HAP-1 (cell line): ENCODE measurements at regions of chr9 and their contacts with region 1.

Region 1: DNA sequence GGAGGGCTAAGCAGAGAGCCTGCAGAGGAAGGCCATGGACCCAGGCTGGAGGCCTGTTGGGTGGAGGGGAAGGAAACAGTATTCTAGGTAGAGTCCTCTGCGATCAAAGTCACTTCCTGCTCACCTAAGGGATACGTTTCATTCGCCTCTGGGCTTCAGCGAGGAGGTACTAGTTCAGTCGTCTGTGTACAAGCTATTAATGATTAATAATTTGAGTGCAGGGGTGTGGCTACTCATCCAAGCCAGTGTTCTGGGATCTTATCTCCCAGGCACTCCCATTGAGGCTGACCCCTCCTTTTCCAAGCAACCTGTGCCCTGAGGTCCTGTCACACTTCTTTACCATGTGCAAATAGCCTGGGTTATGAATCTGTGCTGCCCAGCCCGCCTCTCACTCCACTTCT is 25.2 kb downstream of the RALGPS1 start:
- DNase-seq: no peak
- H3K4me3 ChIP-seq: no peak overlapping the region
- H3K4me1 ChIP-seq: no peaks in the 10 kb centered on the region
- H3K27me3 ChIP-seq: peaks cover 5% of the 10 kb centered on the region; the same call in 1 of the 2 replicates

Region 2: DNA sequence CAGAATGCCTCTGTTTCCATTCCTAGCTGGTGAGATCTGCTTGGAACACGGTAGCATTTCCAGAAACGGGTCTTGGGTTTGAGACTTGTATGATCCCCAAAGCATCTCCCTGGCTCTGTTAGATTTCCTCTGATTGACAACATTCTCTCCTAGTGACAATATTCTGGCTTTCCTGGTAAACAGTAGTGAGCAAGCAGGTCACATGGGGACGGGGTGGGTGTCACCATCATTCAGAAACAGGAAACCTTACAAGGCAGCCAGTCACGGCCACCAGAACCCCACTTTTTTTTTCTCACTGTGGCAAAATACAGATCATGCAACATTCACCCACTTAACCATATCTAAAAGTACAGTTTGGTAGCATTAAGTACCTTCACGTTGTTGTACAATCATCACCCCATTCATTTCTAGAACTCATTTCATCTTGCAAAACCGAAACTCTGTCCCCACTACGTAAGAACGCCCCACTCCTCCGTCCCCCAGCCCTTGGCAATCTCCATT is 416.2 kb before region 1 on chr9:
- in situ Hi-C with region 1: no loop called
- DNase-seq: no peak
- H3K4me3 ChIP-seq: no peak overlapping the region
- H3K4me1 ChIP-seq: no peaks in the 10 kb centered on the region; the same call in 1 of the 2 replicates
- H3K27me3 ChIP-seq: 0 out of 2 replicates have a peak, but pooled peaks cover 3% of the 10 kb centered on the region

Region 3: GRCh38 chr9:126794441-126794840 is 145.4 kb before region 1 on chr9:
- in situ Hi-C with region 1: no loop called
- DNase-seq: no peak
- H3K4me3 ChIP-seq: no peak overlapping the region
- H3K4me1 ChIP-seq: no peaks in the 10 kb centered on the region
- H3K27me3 ChIP-seq: no peaks in the 10 kb centered on the region

Region 4: DNA sequence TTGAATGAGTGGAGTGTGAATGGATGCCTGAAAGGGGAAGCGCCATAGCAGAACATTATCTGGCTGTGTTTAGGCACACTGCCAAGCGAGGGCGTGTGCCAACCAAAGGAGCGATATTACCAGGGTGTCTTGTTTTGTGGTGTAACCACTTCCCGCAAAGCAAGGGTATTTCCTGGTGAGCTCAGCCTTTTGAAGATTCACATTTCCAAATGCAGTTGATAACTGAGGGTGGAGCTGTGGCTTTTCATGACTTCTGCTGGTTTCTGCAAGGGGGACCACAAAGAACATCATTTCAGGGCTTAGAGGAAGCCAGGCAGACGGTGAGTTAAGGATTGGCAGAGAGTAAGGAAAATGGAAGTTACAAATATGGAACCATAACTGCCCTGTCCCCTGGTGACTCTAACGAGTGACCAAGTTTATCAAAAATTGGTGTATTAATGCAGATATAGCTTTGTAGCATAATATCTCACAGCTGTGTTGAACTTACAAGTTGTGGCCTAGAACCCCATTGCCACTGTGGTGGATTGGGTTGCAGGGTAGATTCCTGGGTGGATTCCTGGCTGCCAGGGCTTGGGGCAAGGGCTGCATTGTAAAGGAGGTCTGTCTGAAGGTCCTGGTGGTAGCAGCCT is 46.2 kb after region 1 on chr9:
- in situ Hi-C with region 1: no loop called
- DNase-seq: no peak
- H3K4me3 ChIP-seq: no peak overlapping the region
- H3K4me1 ChIP-seq: no peaks in the 10 kb centered on the region
- H3K27me3 ChIP-seq: no peaks in the 10 kb centered on the region

Region 5: GRCh38 chr9:127199001-127199791 is 259.4 kb after region 1 on chr9:
- in situ Hi-C with region 1: loop called (anchors 5 kb)
- DNase-seq: peak; percentile 59 to 88
- H3K4me3 ChIP-seq: no peak overlapping the region
- H3K4me1 ChIP-seq: no peaks in the 10 kb centered on the region
- H3K27me3 ChIP-seq: no peaks in the 10 kb centered on the region